Activated CD4-positive, alpha-beta memory T cell treated with anti-CD3 and anti-CD28 coated beads, Interleukin-2, amount 10 ng/mL, durations not matched to agents 7 days and 5 days (primary cell): ENCODE measurements at regions of chrX and their contacts with region 1.

Region 1: DNA sequence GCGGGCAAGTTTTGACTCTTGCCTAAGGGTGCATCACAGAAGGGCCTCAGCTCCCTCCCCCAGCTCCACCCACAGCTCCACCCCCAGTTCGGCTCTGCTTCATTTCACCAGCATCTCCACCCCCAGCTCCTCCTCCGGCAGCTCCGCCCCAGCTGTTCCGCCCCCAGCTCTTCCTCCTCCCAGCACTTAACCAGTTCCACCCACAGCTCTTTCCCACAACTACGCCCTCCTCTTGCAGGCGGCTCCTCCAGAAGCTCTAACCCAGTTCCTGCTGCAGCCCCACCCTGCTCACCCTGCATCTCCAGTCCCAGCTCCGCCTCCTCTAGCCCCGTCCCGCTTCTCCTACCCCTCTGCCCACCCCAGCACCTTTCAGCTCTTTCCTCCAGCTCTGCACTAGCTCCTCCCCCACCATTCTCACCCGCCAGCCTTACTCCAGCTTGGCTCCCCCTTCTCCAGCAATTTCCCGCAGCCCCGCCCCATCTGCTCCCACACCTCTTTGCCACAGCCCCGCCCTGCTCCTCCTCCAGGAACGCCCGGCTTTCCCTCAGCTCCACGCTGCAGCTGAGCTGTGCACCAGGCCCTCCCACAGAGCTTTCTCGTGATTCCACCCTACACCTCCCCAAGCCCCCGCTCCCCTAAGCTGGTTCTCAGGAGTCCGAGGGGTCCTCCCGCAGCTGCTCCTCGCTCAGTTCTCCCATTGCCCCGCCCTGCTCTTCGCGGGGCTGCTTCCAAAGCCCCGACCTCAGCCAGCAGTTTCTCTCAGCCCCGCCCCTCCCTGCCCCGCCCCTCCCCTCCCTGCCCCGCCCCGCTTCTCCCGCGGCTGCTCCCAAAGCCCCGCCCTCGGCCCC is 1.3 kb upstream of the EOLA1 start:
- DNase-seq: peak; percentile 92
- H3K4me3 Mint-ChIP-seq: peak overlapping the region; percentile 81
- H3K27ac Mint-ChIP-seq: peak overlapping the region; percentile 90
- H3K4me1 Mint-ChIP-seq: peaks cover 8% of the 10 kb centered on the region
- H3K27me3 Mint-ChIP-seq: no peaks in the 10 kb centered on the region

Region 2: DNA sequence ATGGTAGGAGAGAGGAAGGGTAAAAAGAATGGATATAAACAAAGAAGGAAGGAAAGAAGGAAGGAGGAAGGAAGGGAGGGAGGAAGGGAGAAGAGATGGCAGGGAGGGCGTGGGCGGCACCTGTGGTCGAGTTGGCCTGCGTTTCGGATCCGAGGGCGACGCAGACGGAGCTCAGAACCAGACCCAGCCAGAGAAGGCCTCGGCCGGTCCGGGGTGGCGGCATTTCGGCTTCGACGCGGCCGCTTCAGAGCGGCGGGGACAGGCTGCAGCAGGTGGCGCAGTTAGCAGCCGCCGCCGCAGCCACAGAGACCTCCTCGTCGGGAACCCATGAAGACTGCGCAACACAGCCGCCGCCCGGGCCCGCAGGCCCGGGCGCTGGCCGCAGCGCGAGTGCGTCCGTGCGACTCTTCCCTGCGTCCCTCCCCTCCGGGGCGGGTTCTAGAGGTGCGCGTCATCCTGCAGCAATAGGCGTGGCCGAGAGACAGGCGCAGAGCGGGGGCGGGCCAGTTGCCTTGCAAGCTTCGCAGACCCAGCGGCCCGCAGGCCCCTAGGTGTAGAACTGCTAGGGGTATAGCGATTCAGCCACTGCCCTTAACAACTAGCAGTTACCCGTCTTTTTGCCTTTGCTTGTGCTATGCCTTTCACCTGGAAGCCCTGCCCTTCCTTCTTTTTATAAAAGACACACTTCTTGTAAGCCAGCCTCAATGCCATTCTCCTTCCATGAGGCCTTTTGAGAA is 34.4 kb before region 1 on chrX and contains the start of gene IDS:
- CTCF ChIA-PET with region 1: interaction called, 33 read pairs
- POLR2A ChIA-PET with region 1: interaction called, 43 read pairs
- DNase-seq: peak; percentile 90
- H3K4me3 Mint-ChIP-seq: peak within 1 kb of the TSS; percentile 98
- H3K27ac Mint-ChIP-seq: peak within 1 kb of the TSS; percentile 99
- H3K4me1 Mint-ChIP-seq: peaks cover 40% of the 10 kb centered on the region
- H3K27me3 Mint-ChIP-seq: no peaks in the 10 kb centered on the region
- total RNA-seq, gene IDS: 114 to 116 TPM

Region 3: DNA sequence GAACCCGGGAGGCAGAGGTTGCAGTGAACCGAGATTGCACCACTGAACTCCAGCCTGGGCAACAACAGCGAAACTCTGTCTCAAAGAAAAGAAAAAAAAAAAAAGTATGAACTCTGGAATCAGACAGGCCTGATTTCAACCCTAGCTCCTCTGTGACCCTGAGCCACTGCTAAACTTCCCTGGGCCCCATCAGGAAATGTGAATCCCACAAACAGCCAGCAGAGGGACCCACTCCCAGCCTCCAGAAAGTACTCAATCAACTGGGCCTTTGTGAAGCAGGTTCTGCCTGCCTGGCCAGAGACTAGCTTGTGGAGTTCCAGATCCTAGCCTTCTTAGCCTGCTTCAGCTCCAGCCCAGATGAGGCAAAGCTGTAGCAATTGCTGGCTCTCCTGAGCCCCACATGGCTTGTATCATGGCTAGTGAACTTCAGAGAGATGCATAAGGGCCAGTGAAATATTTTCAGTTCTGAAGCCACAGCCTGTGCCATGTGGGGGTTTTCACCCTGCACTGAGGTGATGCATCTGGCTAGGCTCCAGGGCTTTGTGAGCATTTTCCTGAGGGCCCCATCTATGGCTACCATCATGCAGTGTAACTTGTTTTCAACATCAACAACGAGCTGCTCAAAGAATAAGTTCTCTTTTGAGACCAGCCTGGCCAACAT is 27.2 kb before region 1 on chrX:
- CTCF ChIA-PET with region 1: interaction called, 33 read pairs
- POLR2A ChIA-PET with region 1: interaction called, 7 read pairs
- DNase-seq: peak; percentile 61
- H3K4me3 Mint-ChIP-seq: no peak overlapping the region
- H3K27ac Mint-ChIP-seq: no peak overlapping the region
- H3K4me1 Mint-ChIP-seq: peaks cover 46% of the 10 kb centered on the region
- H3K27me3 Mint-ChIP-seq: peaks cover 2% of the 10 kb centered on the region

Region 4: GRCh38 chrX:149521438-149521837 is 18.1 kb before region 1 on chrX:
- CTCF ChIA-PET with region 1: interaction called, 4 read pairs
- POLR2A ChIA-PET with region 1: interaction called, 19 read pairs
- DNase-seq: no peak
- H3K4me3 Mint-ChIP-seq: no peak overlapping the region
- H3K27ac Mint-ChIP-seq: peak overlapping the region; percentile 71
- H3K4me1 Mint-ChIP-seq: peaks cover 75% of the 10 kb centered on the region
- H3K27me3 Mint-ChIP-seq: no peaks in the 10 kb centered on the region

Region 5: GRCh38 chrX:149527705-149528104 is 11.8 kb before region 1 on chrX:
- CTCF ChIA-PET with region 1: interaction called, 14 read pairs
- POLR2A ChIA-PET with region 1: interaction called, 19 read pairs
- DNase-seq: peak; percentile 46
- H3K4me3 Mint-ChIP-seq: no peak overlapping the region
- H3K27ac Mint-ChIP-seq: peak overlapping the region; percentile 64
- H3K4me1 Mint-ChIP-seq: peaks cover 35% of the 10 kb centered on the region
- H3K27me3 Mint-ChIP-seq: no peaks in the 10 kb centered on the region

Region 6: GRCh38 chrX:149699761-149700160 is 160.3 kb after region 1 on chrX:
- CTCF ChIA-PET with region 1: no interaction called
- POLR2A ChIA-PET with region 1: no interaction called
- DNase-seq: no peak
- H3K4me3 Mint-ChIP-seq: no peak overlapping the region
- H3K27ac Mint-ChIP-seq: no peak overlapping the region
- H3K4me1 Mint-ChIP-seq: no peaks in the 10 kb centered on the region
- H3K27me3 Mint-ChIP-seq: no peaks in the 10 kb centered on the region

Region 7: DNA sequence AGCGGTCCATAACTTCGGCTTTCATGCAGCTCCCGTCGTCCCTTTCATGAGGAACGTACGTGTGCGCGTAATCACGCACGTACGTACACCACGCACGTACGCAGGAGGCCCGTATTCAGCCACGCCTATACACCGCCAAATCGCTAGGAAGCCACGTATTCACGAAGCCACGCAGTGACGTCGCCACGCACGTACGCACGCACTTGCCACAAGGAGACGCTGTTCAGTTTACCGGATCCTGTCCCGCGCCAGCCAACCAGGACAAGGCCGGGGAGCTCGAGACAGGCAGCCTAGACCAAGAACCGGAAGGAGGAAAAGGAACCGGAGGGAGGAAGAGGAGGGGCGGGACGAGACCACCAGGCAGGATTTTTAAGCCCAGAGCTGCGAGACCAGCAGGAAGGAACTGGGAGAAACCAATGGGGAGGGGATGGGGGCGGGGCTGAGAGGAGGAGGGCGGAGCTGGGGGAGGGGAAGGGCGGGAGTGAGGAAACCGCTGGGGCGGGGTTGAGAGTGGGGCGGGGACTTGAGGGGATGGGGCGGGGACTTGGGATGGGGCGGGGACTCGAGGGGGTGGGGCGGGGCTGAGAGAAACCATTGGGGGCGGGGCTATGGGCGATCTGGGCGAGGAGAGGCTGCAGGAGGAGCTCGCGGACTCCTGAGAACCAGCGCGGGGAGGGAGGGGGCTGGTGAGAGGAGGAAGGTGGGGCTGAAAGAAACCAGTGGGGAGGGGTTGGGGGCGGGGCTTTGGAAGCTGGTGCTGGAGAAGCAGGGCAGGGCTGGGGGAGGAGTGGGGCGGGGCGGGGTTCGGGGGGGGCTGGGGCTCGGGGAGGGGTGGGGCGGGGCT is 399.1 kb after region 1 on chrX and contains the start of gene EOLA2:
- CTCF ChIA-PET with region 1: interaction called, 27 read pairs
- POLR2A ChIA-PET with region 1: interaction called, 18 read pairs
- DNase-seq: peak; percentile 94
- H3K4me3 Mint-ChIP-seq: peak within 1 kb of the TSS; percentile 85
- H3K27ac Mint-ChIP-seq: peak within 1 kb of the TSS; percentile 100
- H3K4me1 Mint-ChIP-seq: peaks cover 7% of the 10 kb centered on the region
- H3K27me3 Mint-ChIP-seq: no peaks in the 10 kb centered on the region
- total RNA-seq, gene EOLA2: 40.6 to 45.0 TPM